ENCODE measurements at regions of chr4 and their contacts with region 1.

Region 1: GRCh38 chr4:7156761-7157488 is 35.4 kb upstream of the SORCS2 start:
- DNase-seq: peak in 1 of 2 experiments; percentile 67
- H3K4me3 ChIP-seq: no peak overlapping the region
- H3K27ac ChIP-seq: no peak overlapping the region
- H3K4me1 ChIP-seq: no peaks in the 10 kb centered on the region; a peak in 2 of 7 replicates
- H3K27me3 ChIP-seq: 0 out of 7 replicates have a peak, but pooled peaks cover 0 to 2% (median 0%) of the 10 kb centered on the region in 4 experiments
- CTCF ChIP-seq: peak in 2 of 3 experiments; percentile 45 to 77; a peak in 2 of 4 replicates
- EP300 ChIP-seq: no peak
- POLR2A ChIP-seq: no peak
- RAD21 ChIP-seq: peak; percentile 43 to 59

Region 2: DNA sequence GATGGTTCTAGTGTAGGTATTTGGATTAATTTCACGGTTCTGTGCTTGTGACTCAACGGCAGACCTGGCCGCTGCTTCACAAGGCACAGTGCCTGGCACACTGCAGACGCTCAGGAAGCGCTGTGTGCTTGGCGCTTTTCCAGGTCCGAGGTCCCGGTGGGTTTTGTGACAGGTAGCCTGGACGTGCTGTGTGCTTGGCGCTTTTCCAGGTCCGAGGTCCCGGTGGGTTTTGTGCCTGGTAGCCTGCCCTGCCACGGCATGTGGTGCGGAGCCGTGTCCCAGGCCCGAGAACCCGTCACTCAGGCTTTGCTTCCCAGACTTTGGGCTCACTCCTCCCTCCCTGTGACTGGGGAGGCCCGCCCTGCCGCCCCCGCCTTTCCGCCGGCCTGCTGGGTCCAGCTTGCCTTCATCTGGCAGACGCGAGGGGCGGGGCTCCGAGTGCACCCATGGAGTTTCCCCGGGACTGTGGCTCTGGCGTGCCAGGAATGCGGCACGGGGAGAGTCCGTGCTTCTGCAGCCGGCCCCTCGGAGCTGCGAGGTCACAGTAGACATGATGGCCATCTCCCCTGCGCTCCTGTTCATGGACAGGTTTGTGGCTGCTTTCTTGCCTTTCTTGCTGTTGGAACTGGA is 203.1 kb before region 1 on chr4:
- CTCF ChIA-PET with region 1: no interaction called
- POLR2A ChIA-PET with region 1: no interaction called
- DNase-seq: peak in 1 of 2 experiments; percentile 86
- H3K4me3 ChIP-seq: 0 out of 8 replicates have a peak overlapping the region, but pooled peaks of 1 of the 4 experiments have one; percentile 3
- H3K27ac ChIP-seq: no peak overlapping the region
- H3K4me1 ChIP-seq: peaks cover 0 to 20% (median 12%) of the 10 kb centered on the region in 4 experiments; a peak in 6 of 7 replicates
- H3K27me3 ChIP-seq: no peaks in the 10 kb centered on the region
- CTCF ChIP-seq: no peak
- EP300 ChIP-seq: no peak
- POLR2A ChIP-seq: no peak
- RAD21 ChIP-seq: no peak

Region 3: GRCh38 chr4:7101692-7102515 is 55.0 kb before region 1 on chr4:
- CTCF ChIA-PET with region 1: interaction called, 10 read pairs
- POLR2A ChIA-PET with region 1: no interaction called
- DNase-seq: peak; percentile 63 to 83
- H3K4me3 ChIP-seq: peak overlapping the region in 3 of 4 experiments; percentile 13 to 54 (median 29); a peak in 4 of 8 replicates
- H3K27ac ChIP-seq: no peak overlapping the region
- H3K4me1 ChIP-seq: peaks cover 0 to 12% (median 9%) of the 10 kb centered on the region in 4 experiments; a peak in 6 of 7 replicates
- H3K27me3 ChIP-seq: peaks cover 3 to 34% (median 28%) of the 10 kb centered on the region in 4 experiments
- CTCF ChIP-seq: peak in 2 of 3 experiments; percentile 57 to 85; a peak in 2 of 4 replicates
- EP300 ChIP-seq: no peak
- POLR2A ChIP-seq: no peak
- RAD21 ChIP-seq: peak; percentile 44 to 52

Region 4: GRCh38 chr4:7171191-7171900 is 14.4 kb after region 1 on chr4:
- CTCF ChIA-PET with region 1: interaction called, 12 read pairs
- POLR2A ChIA-PET with region 1: no interaction called
- DNase-seq: no peak
- H3K4me3 ChIP-seq: no peak overlapping the region
- H3K27ac ChIP-seq: no peak overlapping the region
- H3K4me1 ChIP-seq: no peaks in the 10 kb centered on the region
- H3K27me3 ChIP-seq: no peaks in the 10 kb centered on the region; a peak in 1 of 7 replicates
- CTCF ChIP-seq: no peak
- EP300 ChIP-seq: no peak
- POLR2A ChIP-seq: no peak
- RAD21 ChIP-seq: no peak

Region 5: GRCh38 chr4:7192252-7193029 is 35.5 kb after region 1 on chr4 and contains the start of gene SORCS2:
- CTCF ChIA-PET with region 1: interaction called, 11 read pairs
- POLR2A ChIA-PET with region 1: no interaction called
- DNase-seq: peak in 1 of 2 experiments; percentile 80
- H3K4me3 ChIP-seq: peak within 1 kb of the TSS; percentile 33 to 68 (median 48)
- H3K27ac ChIP-seq: no peak within 1 kb of the TSS
- H3K4me1 ChIP-seq: peaks cover 0 to 9% (median 5%) of the 10 kb centered on the region in 4 experiments; a peak in 4 of 7 replicates
- H3K27me3 ChIP-seq: peaks cover 10 to 53% (median 35%) of the 10 kb centered on the region in 4 experiments
- CTCF ChIP-seq: peak in 2 of 3 experiments; percentile 58 to 70; a peak in 3 of 4 replicates
- EP300 ChIP-seq: 0 out of 3 replicates have a peak, but pooled peaks of 1 of the 2 experiments have one; percentile 5
- POLR2A ChIP-seq: no peak
- RAD21 ChIP-seq: peak; percentile 43 to 69
- total RNA-seq, gene SORCS2: 0.75 and 1.8 TPM in 2 replicates

Region 6: GRCh38 chr4:7238300-7238960 is 81.5 kb after region 1 on chr4:
- CTCF ChIA-PET with region 1: interaction called, 11 read pairs
- POLR2A ChIA-PET with region 1: no interaction called
- DNase-seq: peak; percentile 10 to 66
- H3K4me3 ChIP-seq: no peak overlapping the region
- H3K27ac ChIP-seq: no peak overlapping the region
- H3K4me1 ChIP-seq: no peaks in the 10 kb centered on the region
- H3K27me3 ChIP-seq: no peaks in the 10 kb centered on the region
- CTCF ChIP-seq: peak in 2 of 3 experiments; percentile 70 to 87; a peak in 3 of 4 replicates
- EP300 ChIP-seq: no peak
- POLR2A ChIP-seq: no peak
- RAD21 ChIP-seq: peak; percentile 82 to 85

Region 7: GRCh38 chr4:7398104-7398423 is 241.1 kb after region 1 on chr4:
- CTCF ChIA-PET with region 1: no interaction called
- POLR2A ChIA-PET with region 1: no interaction called
- DNase-seq: peak in 1 of 2 experiments; percentile 37
- H3K4me3 ChIP-seq: no peak overlapping the region
- H3K27ac ChIP-seq: no peak overlapping the region
- H3K4me1 ChIP-seq: no peaks in the 10 kb centered on the region
- H3K27me3 ChIP-seq: peaks cover 0 to 3% (median under 1%) of the 10 kb centered on the region in 4 experiments; a peak in 2 of 7 replicates
- CTCF ChIP-seq: no peak
- EP300 ChIP-seq: no peak
- POLR2A ChIP-seq: no peak
- RAD21 ChIP-seq: no peak

Region 8: DNA sequence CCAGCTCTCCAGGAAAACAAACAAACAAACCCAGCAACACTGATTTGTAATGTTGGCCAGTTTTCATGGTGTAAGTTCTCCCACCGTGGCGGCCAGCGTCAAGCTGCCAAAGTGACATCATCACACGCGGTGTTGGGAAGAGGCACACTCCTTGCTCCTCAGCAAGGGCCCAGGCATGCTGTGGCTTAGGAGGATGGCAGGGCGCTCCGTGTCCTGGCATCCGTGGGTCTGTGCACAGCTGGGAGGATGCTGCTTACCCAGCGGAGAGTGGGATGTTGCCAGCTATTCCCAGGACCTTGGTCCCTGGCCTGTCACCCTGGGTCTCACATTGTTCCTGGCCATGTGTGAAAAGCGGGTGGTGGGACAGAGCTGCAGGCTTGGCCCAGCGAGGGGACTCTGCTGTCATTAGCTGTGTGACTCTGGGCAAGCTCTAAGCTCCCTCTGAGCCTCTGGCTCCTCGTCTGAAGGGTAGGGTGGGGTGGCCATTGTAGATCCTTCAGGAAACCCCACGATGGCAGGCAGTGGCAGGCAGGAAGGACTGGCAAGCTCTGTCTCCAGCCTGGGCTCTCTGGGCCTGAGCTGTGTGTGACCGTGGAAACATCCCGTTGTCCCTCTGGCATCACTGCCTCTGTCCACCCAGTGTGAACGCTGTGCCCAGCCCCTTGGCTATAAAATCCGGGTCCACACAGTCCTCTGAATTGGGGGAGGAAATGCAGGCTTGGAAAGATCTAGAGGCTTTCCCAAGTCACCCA is 267.1 kb after region 1 on chr4:
- CTCF ChIA-PET with region 1: no interaction called
- POLR2A ChIA-PET with region 1: no interaction called
- DNase-seq: peak in 1 of 2 experiments; percentile 44
- H3K4me3 ChIP-seq: no peak overlapping the region
- H3K27ac ChIP-seq: no peak overlapping the region
- H3K4me1 ChIP-seq: peaks cover 0 to 12% (median 6%) of the 10 kb centered on the region in 4 experiments; a peak in 4 of 7 replicates
- H3K27me3 ChIP-seq: no peaks in the 10 kb centered on the region; a peak in 1 of 7 replicates
- CTCF ChIP-seq: no peak
- EP300 ChIP-seq: no peak
- POLR2A ChIP-seq: no peak
- RAD21 ChIP-seq: no peak